ENCODE measurements at regions of chr16 and their contacts with region 1.

Region 1: GRCh38 chr16:30054987-30055553 is 10.5 kb upstream of the ALDOA start:
- DNase-seq: no peak
- H3K4me3 ChIP-seq: no peak overlapping the region
- H3K27ac ChIP-seq: peak overlapping the region; percentile 49
- H3K4me1 ChIP-seq: peaks cover 9% of the 10 kb centered on the region
- H3K27me3 ChIP-seq: no peaks in the 10 kb centered on the region
- CTCF ChIP-seq: peak; percentile 52

Region 2: DNA sequence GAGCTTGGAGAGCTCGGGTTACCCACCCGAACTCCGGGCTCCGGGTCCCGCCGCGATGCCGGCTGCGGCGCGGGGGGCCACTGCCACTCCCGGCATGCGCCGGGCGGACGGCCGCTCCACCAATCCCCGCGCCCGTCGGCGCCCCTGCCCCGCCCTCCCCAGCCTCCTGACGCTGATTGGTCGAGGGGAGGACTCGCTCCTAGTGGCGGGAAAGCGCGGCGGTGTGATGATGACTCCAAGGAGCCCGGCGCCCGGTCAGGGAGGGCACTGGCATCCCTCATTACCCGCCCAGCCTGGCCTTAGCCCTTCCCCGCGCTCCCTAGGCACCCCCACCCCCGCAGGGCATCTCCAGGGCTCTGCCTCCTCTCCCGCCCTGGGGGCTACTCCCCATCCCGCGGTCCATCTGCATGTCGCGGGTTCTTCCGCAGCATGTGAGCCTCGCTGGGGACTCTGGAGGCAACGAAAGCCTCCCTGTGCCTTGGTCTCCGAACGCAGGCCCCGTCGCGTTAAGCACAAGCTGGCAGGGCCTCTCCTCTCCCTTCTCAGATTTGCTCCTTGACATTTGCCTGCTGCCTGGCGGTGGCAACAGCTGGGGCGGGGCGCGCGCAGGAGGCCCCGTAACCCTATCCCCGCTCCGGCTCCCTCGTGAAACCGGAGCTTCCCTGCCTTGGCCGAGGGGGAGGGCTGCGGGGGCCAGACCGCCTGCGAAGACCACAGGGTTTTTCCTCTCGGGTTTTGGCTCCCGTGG is 1175.1 kb before region 1 on chr16:
- CTCF ChIA-PET with region 1: no interaction called
- POLR2A ChIA-PET with region 1: no interaction called
- intact Hi-C with region 1: no loop called
- DNase-seq: peak; percentile 94
- H3K4me3 ChIP-seq: peak overlapping the region; percentile 61
- H3K27ac ChIP-seq: peak overlapping the region; percentile 60
- H3K4me1 ChIP-seq: no peaks in the 10 kb centered on the region
- H3K27me3 ChIP-seq: no peaks in the 10 kb centered on the region
- CTCF ChIP-seq: no peak

Region 3: DNA sequence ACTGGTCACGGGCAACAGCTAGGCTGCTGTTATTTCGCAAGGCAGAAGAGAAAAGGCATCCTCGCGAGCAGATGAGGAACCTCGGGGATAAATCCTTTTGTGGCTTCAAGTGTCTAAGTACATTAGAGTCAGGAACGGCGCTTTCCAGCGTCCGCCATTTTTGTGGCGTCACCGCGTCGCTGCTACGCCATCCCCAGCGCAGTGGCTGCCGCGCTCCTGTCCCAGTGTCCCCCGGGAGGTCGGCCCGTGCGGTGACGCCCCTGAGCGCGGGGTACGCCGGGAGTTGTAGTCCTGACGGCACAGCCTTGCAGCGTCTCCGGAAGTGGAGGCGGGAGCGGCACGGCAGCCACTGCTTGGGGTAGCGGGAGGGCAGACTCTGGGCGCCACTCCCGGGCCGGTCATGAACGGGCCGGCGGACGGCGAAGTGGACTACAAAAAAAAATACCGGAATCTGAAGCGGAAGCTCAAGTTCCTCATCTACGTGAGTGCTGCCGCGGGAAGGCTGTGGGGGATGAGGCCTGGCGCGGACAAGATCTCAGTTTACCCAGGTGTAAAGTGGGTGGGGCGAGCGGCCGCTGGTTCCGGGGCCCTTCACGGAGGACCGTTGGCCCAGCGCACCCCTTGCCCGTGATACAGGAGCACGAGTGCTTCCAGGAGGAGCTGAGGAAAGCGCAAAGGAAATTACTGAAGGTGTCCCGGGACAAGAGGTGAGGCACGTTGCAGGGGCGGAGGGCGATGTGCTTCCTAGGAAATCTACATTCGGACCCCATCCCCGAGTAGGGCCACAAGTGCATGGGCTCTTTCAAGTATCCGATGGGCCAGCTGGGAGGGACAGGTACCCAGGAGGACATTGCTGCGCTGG is 58.9 kb before region 1 on chr16 and contains the start of gene INO80E:
- CTCF ChIA-PET with region 1: no interaction called
- POLR2A ChIA-PET with region 1: no interaction called
- intact Hi-C with region 1: no loop called
- DNase-seq: peak; percentile 99
- H3K4me3 ChIP-seq: peak within 1 kb of the TSS; percentile 66
- H3K27ac ChIP-seq: peak within 1 kb of the TSS; percentile 91
- H3K4me1 ChIP-seq: peaks cover 16% of the 10 kb centered on the region
- H3K27me3 ChIP-seq: no peaks in the 10 kb centered on the region
- CTCF ChIP-seq: no peak
- total RNA-seq, gene INO80E: 115 and 120 TPM in 2 replicates

Region 4: GRCh38 chr16:30041846-30042267 is 13.2 kb before region 1 on chr16:
- CTCF ChIA-PET with region 1: interaction called, 11 read pairs
- POLR2A ChIA-PET with region 1: no interaction called
- intact Hi-C with region 1: no loop called
- DNase-seq: peak; percentile 57
- H3K4me3 ChIP-seq: no peak overlapping the region
- H3K27ac ChIP-seq: no peak overlapping the region
- H3K4me1 ChIP-seq: no peaks in the 10 kb centered on the region
- H3K27me3 ChIP-seq: no peaks in the 10 kb centered on the region
- CTCF ChIP-seq: peak; percentile 63

Region 5: DNA sequence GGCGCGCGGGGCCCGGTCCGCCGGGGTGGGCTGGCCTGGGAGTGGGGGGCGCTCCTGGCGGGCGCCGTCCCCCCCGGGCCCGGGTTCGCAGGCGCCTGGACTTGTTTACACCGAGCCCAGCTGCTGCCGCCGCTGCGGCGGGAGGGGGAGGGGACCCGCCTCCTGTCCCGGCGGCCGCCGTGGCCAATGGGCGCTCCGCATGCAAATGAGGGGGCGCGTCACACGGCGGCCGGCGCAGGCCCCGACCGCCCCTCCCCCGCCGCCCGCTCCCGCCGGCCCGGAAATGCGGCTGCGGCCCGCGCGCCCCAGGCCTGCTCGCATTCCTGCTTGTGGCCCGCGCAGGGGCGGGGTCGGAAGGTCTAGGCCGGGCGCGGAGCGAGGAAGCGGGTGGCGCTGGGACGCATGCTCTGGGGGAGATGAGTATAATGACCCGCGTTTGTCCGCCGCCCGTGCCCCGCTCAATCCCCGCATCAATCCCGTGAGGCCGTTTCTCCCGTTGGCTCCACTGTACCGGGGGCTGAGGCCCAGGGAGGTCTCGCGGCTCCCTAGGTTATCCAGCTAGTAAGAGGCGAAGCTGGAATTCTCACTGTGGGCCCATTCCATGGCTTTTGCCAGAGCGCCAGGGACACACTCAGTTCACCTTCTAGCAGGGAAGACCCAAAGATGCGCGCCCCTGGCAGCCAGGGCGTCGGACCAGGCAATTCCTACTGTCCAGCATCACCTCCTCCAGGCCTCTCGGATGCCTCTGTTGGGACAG is 41.2 kb after region 1 on chr16 and contains the start of gene YPEL3:
- CTCF ChIA-PET with region 1: no interaction called
- POLR2A ChIA-PET with region 1: no interaction called
- intact Hi-C with region 1: no loop called
- DNase-seq: peak; percentile 89
- H3K4me3 ChIP-seq: peak within 1 kb of the TSS; percentile 38
- H3K27ac ChIP-seq: peak within 1 kb of the TSS; percentile 72
- H3K4me1 ChIP-seq: peaks cover 15% of the 10 kb centered on the region
- H3K27me3 ChIP-seq: no peaks in the 10 kb centered on the region
- CTCF ChIP-seq: no peak
- total RNA-seq, gene YPEL3: 4.7 and 9.1 TPM in 2 replicates